PC-9 (cell line): ENCODE measurements at regions of chr3 and their contacts with region 1.

Region 1: DNA sequence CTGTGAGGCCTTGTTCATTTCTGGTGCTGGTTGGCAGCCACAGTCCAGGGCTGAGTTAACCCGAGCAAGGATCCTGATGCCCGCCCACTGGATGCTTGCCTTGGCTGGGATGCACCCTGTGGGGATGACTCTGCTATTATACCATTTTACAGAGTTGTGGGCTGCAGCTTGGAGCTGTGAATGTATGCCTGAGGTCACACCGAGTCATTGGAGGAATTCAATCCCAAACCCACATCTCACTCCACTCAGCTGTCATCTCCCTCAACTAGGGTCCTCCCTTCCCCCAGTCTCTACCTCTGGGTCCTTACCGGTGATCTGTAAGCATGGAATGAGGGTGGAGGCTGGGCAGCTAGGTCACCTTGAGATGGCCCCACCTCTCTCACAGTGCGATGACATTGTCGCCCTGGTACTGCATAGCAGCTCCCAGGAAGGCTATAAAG is 22.1 kb downstream of the MAPKAPK3 start:
- DNase-seq: no peak
- H3K4me3 ChIP-seq: no peak overlapping the region
- H3K27ac ChIP-seq: no peak overlapping the region
- H3K4me1 ChIP-seq: no peaks in the 10 kb centered on the region
- H3K27me3 ChIP-seq: no peaks in the 10 kb centered on the region
- CTCF ChIP-seq: no peak

Region 2: DNA sequence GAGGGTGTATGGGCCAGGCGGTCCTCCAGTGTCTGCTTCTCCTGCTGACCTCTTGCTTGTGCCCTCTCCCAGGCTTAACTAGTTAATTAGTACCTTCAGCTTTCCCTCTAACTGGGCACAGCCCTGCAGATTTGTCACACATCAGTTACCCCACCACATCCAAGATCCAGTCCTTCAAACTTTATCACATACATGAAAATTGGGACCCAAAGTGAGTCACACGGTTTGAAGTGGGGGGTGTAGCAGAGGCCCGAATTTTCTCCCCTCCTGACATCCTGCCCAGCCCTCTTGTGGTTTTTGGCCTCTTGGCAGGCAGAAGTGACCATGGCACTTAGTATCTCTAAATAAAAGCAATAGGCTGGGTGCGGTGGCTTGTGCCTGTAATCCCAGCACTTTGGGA is 18.3 kb before region 1 on chr3:
- CTCF ChIA-PET with region 1: interaction called, 10 read pairs
- POLR2A ChIA-PET with region 1: no interaction called
- intact Hi-C with region 1: no loop called
- DNase-seq: peak in 1 of 2 experiments; percentile 56
- H3K4me3 ChIP-seq: no peak overlapping the region
- H3K27ac ChIP-seq: peak overlapping the region; percentile 19
- H3K4me1 ChIP-seq: peaks cover 60% of the 10 kb centered on the region
- H3K27me3 ChIP-seq: no peaks in the 10 kb centered on the region
- CTCF ChIP-seq: no peak; the same call in 1 of the 2 replicates

Region 3: GRCh38 chr3:51282931-51283330 is 643.9 kb after region 1 on chr3:
- CTCF ChIA-PET with region 1: no interaction called
- POLR2A ChIA-PET with region 1: no interaction called
- intact Hi-C with region 1: no loop called
- DNase-seq: no peak
- H3K4me3 ChIP-seq: no peak overlapping the region
- H3K27ac ChIP-seq: no peak overlapping the region
- H3K4me1 ChIP-seq: no peaks in the 10 kb centered on the region
- H3K27me3 ChIP-seq: no peaks in the 10 kb centered on the region
- CTCF ChIP-seq: no peak